ENCODE measurements at regions of chr1 and their contacts with region 1.

Region 1: DNA sequence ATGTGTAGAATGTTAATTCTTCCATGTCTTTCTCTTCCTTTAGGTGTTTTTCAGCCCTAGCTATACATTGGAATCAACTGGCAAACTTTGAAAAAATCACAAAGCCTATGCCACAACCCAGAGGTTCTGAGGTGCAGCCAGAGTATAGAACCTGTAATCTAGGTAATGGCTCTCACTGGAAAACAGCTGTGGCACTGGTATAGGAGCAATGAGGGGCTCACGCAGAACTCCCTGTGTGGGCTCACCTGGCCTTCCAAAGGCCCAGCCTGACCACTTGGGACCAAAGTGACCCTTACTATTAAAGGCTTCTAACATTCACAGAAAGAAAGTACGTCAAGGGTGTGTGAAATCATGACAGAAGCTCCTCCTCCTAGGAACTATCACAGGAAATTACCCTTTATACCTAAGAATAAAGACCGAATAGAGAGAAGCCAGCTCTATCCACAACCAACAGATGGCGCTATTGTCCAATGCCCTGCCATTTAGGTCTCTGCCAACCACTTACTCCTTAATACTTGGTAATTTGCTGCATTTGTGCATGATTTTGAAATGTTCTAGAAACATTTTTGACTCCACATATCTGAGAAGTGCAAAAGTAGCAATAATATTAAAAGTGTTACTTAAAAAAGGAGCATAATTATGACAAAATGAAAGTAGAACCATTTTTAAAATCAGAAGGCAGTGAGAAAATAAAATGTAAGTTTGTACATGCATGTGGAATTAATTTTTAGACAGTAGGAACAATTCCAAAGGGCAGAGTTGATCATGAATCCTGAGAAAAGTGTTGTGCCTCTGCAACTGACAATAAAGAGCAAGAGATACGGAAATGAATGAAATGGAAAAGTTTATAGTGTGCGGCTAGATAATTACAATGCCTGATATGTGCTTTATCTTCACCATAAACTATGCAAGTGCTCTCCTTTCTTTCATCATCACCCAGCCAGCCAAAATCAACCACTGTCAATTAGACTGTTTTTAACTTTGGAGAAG is 93.1 kb upstream of the HAO2 start:
- DNase-seq: peak; percentile 53
- H3K4me3 ChIP-seq: no peak overlapping the region
- H3K27ac ChIP-seq: no peak overlapping the region
- H3K4me1 ChIP-seq: peaks cover 21% of the 10 kb centered on the region
- H3K27me3 ChIP-seq: no peaks in the 10 kb centered on the region
- CTCF ChIP-seq: peak; percentile 93 to 98

Region 2: GRCh38 chr1:118077331-118078055 is 1197.9 kb before region 1 on chr1:
- CTCF ChIA-PET with region 1: no interaction called
- dilution Hi-C with region 1: no loop called
- in situ Hi-C with region 1: no loop called
- intact Hi-C with region 1: loop called (anchors 5 kb)
- DNase-seq: peak; percentile 28
- H3K4me3 ChIP-seq: no peak overlapping the region
- H3K27ac ChIP-seq: no peak overlapping the region
- H3K4me1 ChIP-seq: no peaks in the 10 kb centered on the region
- H3K27me3 ChIP-seq: peaks cover 2% of the 10 kb centered on the region
- CTCF ChIP-seq: peak; percentile 44 to 61

Region 3: GRCh38 chr1:118304722-118305359 is 970.6 kb before region 1 on chr1:
- CTCF ChIA-PET with region 1: no interaction called
- dilution Hi-C with region 1: no loop called
- in situ Hi-C with region 1: no loop called
- intact Hi-C with region 1: loop called (anchors 1 kb)
- DNase-seq: no peak
- H3K4me3 ChIP-seq: no peak overlapping the region
- H3K27ac ChIP-seq: no peak overlapping the region
- H3K4me1 ChIP-seq: no peaks in the 10 kb centered on the region
- H3K27me3 ChIP-seq: no peaks in the 10 kb centered on the region
- CTCF ChIP-seq: peak; percentile 74

Region 4: GRCh38 chr1:119140177-119141019 is 135.0 kb before region 1 on chr1 and contains the start of gene WARS2:
- CTCF ChIA-PET with region 1: no interaction called
- dilution Hi-C with region 1: no loop called
- in situ Hi-C with region 1: no loop called
- intact Hi-C with region 1: loop called (anchors 2 kb)
- DNase-seq: peak; percentile 96
- H3K4me3 ChIP-seq: peak within 1 kb of the TSS; percentile 52 to 73 (median 65)
- H3K27ac ChIP-seq: peak within 1 kb of the TSS; percentile 98
- H3K4me1 ChIP-seq: peaks cover 23% of the 10 kb centered on the region
- H3K27me3 ChIP-seq: no peaks in the 10 kb centered on the region
- CTCF ChIP-seq: no peak
- total RNA-seq, gene WARS2: 12.1 to 16.5 TPM

Region 5: DNA sequence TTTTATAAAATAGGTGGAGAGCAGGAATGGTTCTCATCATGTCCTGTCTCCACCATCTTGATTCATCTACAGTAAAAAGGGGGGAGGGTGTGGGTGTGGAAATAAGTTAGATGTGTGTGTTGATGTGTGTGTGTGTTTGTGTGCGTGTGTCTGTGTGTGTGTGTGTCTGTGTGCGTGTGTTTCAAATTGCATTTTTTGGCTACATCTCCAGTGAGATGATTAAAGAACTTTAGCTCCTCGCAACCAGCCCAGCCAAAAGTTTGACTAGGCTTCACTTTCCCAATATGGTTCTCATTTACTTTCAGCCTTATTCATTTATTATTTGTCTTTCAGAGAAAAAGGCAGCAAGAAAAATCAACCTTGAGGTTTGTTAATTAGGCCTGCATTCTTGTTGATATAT is 78.4 kb after region 1 on chr1:
- CTCF ChIA-PET with region 1: no interaction called
- dilution Hi-C with region 1: no loop called
- in situ Hi-C with region 1: no loop called
- intact Hi-C with region 1: no loop called
- DNase-seq: no peak
- H3K4me3 ChIP-seq: no peak overlapping the region
- H3K27ac ChIP-seq: no peak overlapping the region
- H3K4me1 ChIP-seq: peaks cover 9% of the 10 kb centered on the region
- H3K27me3 ChIP-seq: no peaks in the 10 kb centered on the region
- CTCF ChIP-seq: no peak

Region 6: DNA sequence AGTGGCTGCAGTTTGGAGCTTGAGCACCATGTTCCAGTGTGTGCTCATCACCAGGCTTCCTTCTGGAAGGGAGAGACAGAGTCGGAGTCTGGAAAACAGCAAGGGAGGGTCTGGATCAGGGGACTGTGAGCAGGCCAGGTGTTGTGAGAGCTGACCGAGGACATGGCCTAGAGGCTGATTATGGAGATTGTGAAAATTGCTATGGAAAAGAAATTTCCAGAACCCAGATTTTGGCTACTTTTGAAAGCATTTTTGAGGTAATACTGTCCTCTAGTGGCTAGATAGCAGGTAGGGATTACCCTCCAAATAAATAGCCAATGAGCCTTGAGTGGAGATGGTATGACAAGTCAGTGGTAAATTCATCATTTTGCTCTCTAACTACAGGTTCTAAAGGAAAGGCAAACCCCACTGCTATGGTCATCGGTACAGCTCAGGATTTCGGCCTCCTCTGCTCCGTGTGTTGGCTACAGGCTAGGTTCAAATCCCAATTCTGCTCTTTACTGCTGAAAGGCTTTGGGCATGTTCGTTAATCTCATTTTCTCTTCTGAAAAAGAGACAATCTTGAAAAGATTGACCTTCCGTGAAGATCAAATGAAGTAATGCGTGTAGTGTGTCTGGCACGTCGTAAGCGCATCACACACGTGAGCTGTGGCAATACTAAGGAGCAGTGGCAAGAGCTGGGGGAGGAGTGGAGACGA is 92.1 kb after region 1 on chr1:
- CTCF ChIA-PET with region 1: no interaction called
- dilution Hi-C with region 1: no loop called
- in situ Hi-C with region 1: no loop called
- intact Hi-C with region 1: loop called (anchors 1 kb)
- DNase-seq: peak; percentile 57
- H3K4me3 ChIP-seq: no peak overlapping the region
- H3K27ac ChIP-seq: no peak overlapping the region
- H3K4me1 ChIP-seq: peaks cover 12% of the 10 kb centered on the region
- H3K27me3 ChIP-seq: no peaks in the 10 kb centered on the region
- CTCF ChIP-seq: peak; percentile 97 to 99

Measured in mammary epithelial cell (primary cell).